ENCODE measurements at regions of chr10 and their contacts with region 1.

Region 1: GRCh38 chr10:99732033-99732912 is at the starts of genes COX15 and CUTC:
- DNase-seq: peak; percentile 89 to 98 (median 93)
- ATAC-seq: peak; percentile 89
- H3K4me3 ChIP-seq: peak within 1 kb of the TSS; percentile 82
- H3K4me3 Mint-ChIP-seq: peak within 1 kb of the TSS; percentile 98
- H3K27ac ChIP-seq: peak within 1 kb of the TSS; percentile 86 to 87
- H3K27ac Mint-ChIP-seq: peak within 1 kb of the TSS; percentile 91
- H3K4me1 ChIP-seq: peaks cover 26% of the 10 kb centered on the region
- H3K4me1 Mint-ChIP-seq: peaks cover 48% of the 10 kb centered on the region
- H3K27me3 ChIP-seq: no peaks in the 10 kb centered on the region
- H3K27me3 Mint-ChIP-seq: no peaks in the 10 kb centered on the region
- CTCF ChIP-seq: peak; percentile 6
- total RNA-seq, gene COX15: 7.7 to 7.9 TPM
- total RNA-seq, gene CUTC: 14.1 to 16.0 TPM

Region 2: GRCh38 chr10:98446661-98447221 is 1285.5 kb before region 1 on chr10 and contains the start of gene HPS1:
- CTCF ChIA-PET with region 1: no interaction called
- POLR2A ChIA-PET with region 1: no interaction called
- intact Hi-C with region 1: loop called in 1 of 2 experiments (anchors 10 kb)
- DNase-seq: peak; percentile 58 to 88 (median 75)
- ATAC-seq: peak; percentile 91
- H3K4me3 ChIP-seq: peak within 1 kb of the TSS; percentile 71
- H3K4me3 Mint-ChIP-seq: peak within 1 kb of the TSS; percentile 94
- H3K27ac ChIP-seq: peak within 1 kb of the TSS; percentile 66 to 77
- H3K27ac Mint-ChIP-seq: peak within 1 kb of the TSS; percentile 93
- H3K4me1 ChIP-seq: peaks cover 41% of the 10 kb centered on the region
- H3K4me1 Mint-ChIP-seq: peaks cover 40% of the 10 kb centered on the region
- H3K27me3 ChIP-seq: no peaks in the 10 kb centered on the region
- H3K27me3 Mint-ChIP-seq: peaks cover 1% of the 10 kb centered on the region
- CTCF ChIP-seq: no peak
- total RNA-seq, gene HPS1: 49.8 to 50.5 TPM

Region 3: DNA sequence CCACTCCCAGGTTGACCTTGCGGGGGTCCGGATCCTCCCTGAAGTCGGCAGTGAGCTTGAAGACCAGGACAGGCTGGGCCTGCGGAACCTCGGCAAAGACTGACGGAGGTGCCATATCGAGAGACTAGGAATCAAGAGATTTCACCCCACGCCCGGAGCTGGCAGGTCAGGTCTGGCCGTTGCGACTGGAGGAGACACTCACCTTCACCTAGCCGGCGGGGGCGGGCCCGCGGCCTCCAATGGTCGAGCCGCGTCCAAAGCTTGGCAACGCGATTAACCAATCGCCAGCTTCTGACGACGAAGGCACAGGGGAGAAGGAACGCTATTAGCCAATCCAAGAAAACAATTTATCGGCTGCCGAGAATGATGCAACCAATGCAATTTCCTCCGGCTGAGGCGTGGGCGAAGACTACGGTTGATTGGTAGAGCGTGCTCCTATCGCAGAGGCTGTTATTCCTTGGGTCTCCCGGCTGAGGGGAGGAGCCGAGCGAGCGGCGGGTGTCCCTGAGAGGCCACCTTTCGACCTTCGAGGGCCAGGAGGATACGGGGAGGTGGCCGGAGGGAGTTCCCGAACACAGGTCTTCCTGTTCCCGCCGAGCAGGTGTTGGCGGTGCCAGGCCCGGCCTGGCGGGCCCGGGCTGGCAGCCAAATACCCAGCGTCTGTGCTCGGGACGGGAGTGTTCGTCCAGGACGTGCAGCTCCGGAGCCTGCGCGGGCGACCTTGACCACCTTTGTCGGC is 301.7 kb before region 1 on chr10 and contains the start of gene GOT1:
- CTCF ChIA-PET with region 1: interaction called, 6 read pairs
- POLR2A ChIA-PET with region 1: interaction called, 12 read pairs
- intact Hi-C with region 1: loop called in 1 of 2 experiments (anchors 5 kb)
- DNase-seq: peak; percentile 79 to 98 (median 87)
- ATAC-seq: peak; percentile 93
- H3K4me3 ChIP-seq: peak within 1 kb of the TSS; percentile 93
- H3K4me3 Mint-ChIP-seq: peak within 1 kb of the TSS; percentile 91
- H3K27ac ChIP-seq: peak within 1 kb of the TSS; percentile 52 to 67
- H3K27ac Mint-ChIP-seq: peak within 1 kb of the TSS; percentile 95
- H3K4me1 ChIP-seq: peaks cover 17% of the 10 kb centered on the region
- H3K4me1 Mint-ChIP-seq: peaks cover 47% of the 10 kb centered on the region
- H3K27me3 ChIP-seq: no peaks in the 10 kb centered on the region
- H3K27me3 Mint-ChIP-seq: no peaks in the 10 kb centered on the region
- CTCF ChIP-seq: no peak
- total RNA-seq, gene GOT1: 3.5 to 5.7 TPM

Region 4: GRCh38 chr10:99620713-99621453 is 111.4 kb before region 1 on chr10:
- CTCF ChIA-PET with region 1: no interaction called
- POLR2A ChIA-PET with region 1: interaction called, 57 read pairs
- intact Hi-C with region 1: loop called (anchors 2 to 5 kb)
- DNase-seq: peak; percentile 68 to 98 (median 83)
- ATAC-seq: peak; percentile 85
- H3K4me3 ChIP-seq: peak overlapping the region; percentile 82
- H3K4me3 Mint-ChIP-seq: peak overlapping the region; percentile 91
- H3K27ac ChIP-seq: peak overlapping the region; percentile 93 to 96
- H3K27ac Mint-ChIP-seq: peak overlapping the region; percentile 91
- H3K4me1 ChIP-seq: peaks cover 19% of the 10 kb centered on the region
- H3K4me1 Mint-ChIP-seq: peaks cover 52% of the 10 kb centered on the region
- H3K27me3 ChIP-seq: no peaks in the 10 kb centered on the region
- H3K27me3 Mint-ChIP-seq: no peaks in the 10 kb centered on the region
- CTCF ChIP-seq: no peak

Region 5: DNA sequence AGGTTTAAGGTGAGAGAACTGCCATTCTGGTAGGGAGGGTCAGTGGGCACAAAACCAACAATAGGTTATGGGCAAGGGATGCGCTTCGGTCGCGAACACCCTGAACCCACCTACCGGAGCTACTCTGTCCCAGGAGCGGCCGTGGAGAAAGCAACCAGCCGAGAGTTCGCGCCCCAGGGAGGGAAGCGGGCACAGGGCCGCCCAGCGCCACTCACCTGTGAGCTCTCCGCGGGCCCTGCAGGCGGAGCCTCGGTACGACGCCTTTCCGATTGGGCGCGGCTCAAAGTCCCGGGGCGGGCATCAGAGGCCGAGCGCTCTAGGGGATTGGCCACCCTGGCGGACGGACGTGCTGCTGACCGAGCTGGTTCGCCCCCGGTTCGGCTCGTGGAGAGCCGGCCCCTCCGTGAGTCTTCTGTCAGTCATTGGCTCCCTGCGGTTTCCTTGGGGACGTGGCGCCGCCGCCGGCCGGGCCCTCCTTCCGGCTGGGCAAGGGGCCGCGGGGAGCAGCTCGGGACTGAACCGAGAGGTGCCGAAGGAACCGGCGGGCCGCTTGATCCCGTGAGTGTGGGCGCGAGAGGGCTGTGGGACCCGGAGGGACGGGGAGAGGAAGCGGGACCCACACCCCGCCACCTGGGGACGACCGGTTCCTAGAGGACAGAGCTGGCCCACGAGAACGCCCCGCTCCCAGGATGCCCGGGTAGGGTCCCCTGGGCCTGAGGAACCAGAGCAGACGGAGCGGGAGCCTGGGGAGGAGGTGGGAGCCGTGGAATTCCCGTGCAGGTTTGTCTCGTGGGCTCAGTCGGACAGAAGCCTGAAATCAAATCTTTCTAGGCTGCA is 73.0 kb before region 1 on chr10 and contains the start of gene ENTPD7:
- CTCF ChIA-PET with region 1: no interaction called
- POLR2A ChIA-PET with region 1: interaction called, 8 read pairs
- intact Hi-C with region 1: loop called in 1 of 2 experiments (anchors 5 kb)
- DNase-seq: peak; percentile 71 to 94 (median 84)
- ATAC-seq: peak; percentile 98
- H3K4me3 ChIP-seq: peak within 1 kb of the TSS; percentile 85
- H3K4me3 Mint-ChIP-seq: peak within 1 kb of the TSS; percentile 87
- H3K27ac ChIP-seq: peak within 1 kb of the TSS in 1 of 2 donors; percentile 7
- H3K27ac Mint-ChIP-seq: peak within 1 kb of the TSS; percentile 46
- H3K4me1 ChIP-seq: peaks cover 16% of the 10 kb centered on the region
- H3K4me1 Mint-ChIP-seq: peaks cover 28% of the 10 kb centered on the region
- H3K27me3 ChIP-seq: no peaks in the 10 kb centered on the region
- H3K27me3 Mint-ChIP-seq: peaks cover 11% of the 10 kb centered on the region
- CTCF ChIP-seq: peak; percentile 29
- total RNA-seq, gene ENTPD7: 1.1 to 1.4 TPM

Region 6: GRCh38 chr10:100185364-100186252 is 453.3 kb after region 1 on chr10 and contains the start of gene ERLIN1:
- CTCF ChIA-PET with region 1: no interaction called
- POLR2A ChIA-PET with region 1: no interaction called
- intact Hi-C with region 1: loop called in 1 of 2 experiments (anchors 5 kb)
- DNase-seq: peak; percentile 82 to 96 (median 90)
- ATAC-seq: peak; percentile 92
- H3K4me3 ChIP-seq: peak within 1 kb of the TSS; percentile 80
- H3K4me3 Mint-ChIP-seq: peak within 1 kb of the TSS; percentile 98
- H3K27ac ChIP-seq: peak within 1 kb of the TSS; percentile 72 to 81
- H3K27ac Mint-ChIP-seq: peak within 1 kb of the TSS; percentile 92
- H3K4me1 ChIP-seq: peaks cover 22% of the 10 kb centered on the region
- H3K4me1 Mint-ChIP-seq: peaks cover 73% of the 10 kb centered on the region
- H3K27me3 ChIP-seq: no peaks in the 10 kb centered on the region
- H3K27me3 Mint-ChIP-seq: no peaks in the 10 kb centered on the region
- CTCF ChIP-seq: no peak
- total RNA-seq, gene ERLIN1: 1.5 to 2.9 TPM

Region 7: DNA sequence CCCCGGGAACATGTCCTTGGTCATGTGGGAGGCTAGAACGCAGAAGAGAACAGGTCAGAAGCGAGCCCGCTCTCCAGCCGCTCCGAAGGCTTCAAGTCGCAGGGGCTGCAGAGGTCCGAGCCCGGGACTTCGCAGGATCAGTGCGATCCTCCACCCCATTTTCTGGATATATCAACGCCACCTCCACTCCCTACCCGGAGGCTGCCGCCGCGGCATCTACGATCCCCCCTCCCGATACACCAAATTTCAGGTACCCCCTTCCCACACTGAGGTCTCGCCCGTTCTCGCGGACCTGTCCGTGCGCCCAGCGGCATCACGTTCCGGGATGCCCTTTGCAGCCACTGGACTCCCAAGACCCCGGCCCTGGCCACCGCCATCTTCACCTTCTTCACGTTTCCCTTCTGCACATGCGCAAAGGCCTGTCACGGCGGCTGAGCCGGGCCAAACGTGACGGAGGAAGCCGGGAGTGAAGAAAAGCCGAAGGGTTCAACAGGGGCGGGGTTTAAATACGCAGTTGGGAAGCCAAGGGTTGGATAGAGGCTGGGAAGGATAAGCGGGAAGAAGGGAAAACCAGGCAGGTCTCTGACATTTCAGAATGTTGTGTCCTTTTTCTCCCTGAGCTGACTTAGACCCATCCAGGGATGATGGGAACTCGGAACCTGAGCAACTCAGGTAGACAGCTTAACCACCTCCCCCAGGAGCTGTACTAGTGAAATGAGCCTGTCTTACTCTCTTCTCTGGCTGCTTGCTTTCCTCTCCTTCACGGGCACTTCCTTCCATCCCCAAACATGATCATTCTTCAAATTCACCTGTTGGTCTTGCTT is 797.4 kb after region 1 on chr10 and contains the start of gene NDUFB8:
- CTCF ChIA-PET with region 1: no interaction called
- POLR2A ChIA-PET with region 1: interaction called, 3 read pairs
- intact Hi-C with region 1: loop called in 1 of 2 experiments (anchors 5 kb)
- DNase-seq: peak; percentile 82 to 92 (median 84)
- ATAC-seq: peak; percentile 81
- H3K4me3 ChIP-seq: peak within 1 kb of the TSS; percentile 96
- H3K4me3 Mint-ChIP-seq: peak within 1 kb of the TSS; percentile 90
- H3K27ac ChIP-seq: peak within 1 kb of the TSS; percentile 71 to 80
- H3K27ac Mint-ChIP-seq: peak within 1 kb of the TSS; percentile 86
- H3K4me1 ChIP-seq: peaks cover 39% of the 10 kb centered on the region
- H3K4me1 Mint-ChIP-seq: peaks cover 38% of the 10 kb centered on the region
- H3K27me3 ChIP-seq: no peaks in the 10 kb centered on the region
- H3K27me3 Mint-ChIP-seq: no peaks in the 10 kb centered on the region
- CTCF ChIP-seq: no peak
- total RNA-seq, gene NDUFB8: 155 to 173 TPM